Body of pancreas (tissue), 4 donors: ENCODE measurements at regions of chr6 and their contacts with region 1.

Region 1: DNA sequence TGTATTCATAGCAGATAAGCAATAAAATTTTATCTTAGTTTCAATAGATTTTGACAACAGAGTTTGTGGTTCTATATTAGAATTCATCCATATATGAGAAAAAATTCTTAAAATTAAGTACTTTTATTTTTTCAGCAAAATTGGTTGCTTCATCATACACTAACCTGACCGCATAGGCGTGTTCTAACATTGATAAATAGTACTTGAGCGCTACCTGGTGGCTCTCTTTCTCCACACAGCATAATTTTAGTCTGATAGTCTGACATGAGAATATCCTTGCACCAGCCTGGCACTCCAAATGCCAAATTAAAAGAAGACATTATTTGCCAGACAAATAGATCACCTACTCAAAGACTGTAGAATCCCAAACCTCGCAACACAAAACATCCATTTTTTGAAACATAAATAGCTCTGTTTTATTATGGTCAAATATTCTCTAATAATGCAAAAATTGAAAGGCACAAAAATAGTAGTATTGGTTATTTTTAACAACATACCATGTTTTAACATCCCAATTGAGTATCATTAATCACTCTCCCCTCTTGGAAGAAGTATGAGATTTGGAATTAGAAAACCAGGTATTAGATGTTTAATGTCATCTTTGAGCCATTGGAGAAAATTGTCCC is 33.0 kb upstream of the FILIP1 start:
- DNase-seq: peak; percentile 74 to 86 (median 80)
- ATAC-seq: peak; percentile 91
- H3K4me3 ChIP-seq: no peak overlapping the region
- H3K27ac ChIP-seq: no peak overlapping the region
- H3K4me1 ChIP-seq: peaks cover 6% of the 10 kb centered on the region
- H3K27me3 ChIP-seq: no peaks in the 10 kb centered on the region
- CTCF ChIP-seq: peak; percentile 33 to 92 (median 81)
- POLR2A ChIP-seq: no peak

Region 2: DNA sequence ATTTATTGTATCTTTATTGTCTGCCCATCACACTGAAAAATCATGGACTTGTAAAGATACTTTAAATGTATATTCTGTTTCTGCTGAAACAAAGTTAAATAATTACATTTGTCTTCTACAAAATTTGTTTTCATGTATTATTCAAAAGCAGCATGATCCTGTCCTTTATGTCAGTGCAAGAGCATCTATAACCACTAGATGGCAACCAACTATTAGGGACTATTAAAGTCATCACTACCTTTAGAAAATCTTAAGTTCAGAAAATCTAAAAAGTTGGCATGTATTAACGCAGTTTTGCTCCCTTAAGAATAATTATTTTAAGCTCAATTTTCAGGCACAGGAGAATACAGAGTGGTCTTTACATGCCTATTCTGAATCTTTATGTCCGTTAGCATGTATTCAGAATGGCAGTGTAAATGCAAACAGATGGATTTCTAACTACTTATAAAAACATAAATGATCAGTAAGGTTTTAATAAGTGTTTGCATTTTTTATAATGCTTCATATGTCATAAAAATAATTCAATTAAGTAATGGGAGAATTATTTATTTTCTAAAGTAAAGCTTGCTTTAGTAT is 259.8 kb before region 1 on chr6:
- intact Hi-C with region 1: loop called (anchors 10 kb)
- DNase-seq: no peak
- ATAC-seq: peak; percentile 72
- H3K4me3 ChIP-seq: no peak overlapping the region
- H3K27ac ChIP-seq: no peak overlapping the region
- H3K4me1 ChIP-seq: peaks cover 49% of the 10 kb centered on the region
- H3K27me3 ChIP-seq: no peaks in the 10 kb centered on the region
- CTCF ChIP-seq: peak; percentile 72 to 94 (median 81)
- POLR2A ChIP-seq: no peak

Region 3: DNA sequence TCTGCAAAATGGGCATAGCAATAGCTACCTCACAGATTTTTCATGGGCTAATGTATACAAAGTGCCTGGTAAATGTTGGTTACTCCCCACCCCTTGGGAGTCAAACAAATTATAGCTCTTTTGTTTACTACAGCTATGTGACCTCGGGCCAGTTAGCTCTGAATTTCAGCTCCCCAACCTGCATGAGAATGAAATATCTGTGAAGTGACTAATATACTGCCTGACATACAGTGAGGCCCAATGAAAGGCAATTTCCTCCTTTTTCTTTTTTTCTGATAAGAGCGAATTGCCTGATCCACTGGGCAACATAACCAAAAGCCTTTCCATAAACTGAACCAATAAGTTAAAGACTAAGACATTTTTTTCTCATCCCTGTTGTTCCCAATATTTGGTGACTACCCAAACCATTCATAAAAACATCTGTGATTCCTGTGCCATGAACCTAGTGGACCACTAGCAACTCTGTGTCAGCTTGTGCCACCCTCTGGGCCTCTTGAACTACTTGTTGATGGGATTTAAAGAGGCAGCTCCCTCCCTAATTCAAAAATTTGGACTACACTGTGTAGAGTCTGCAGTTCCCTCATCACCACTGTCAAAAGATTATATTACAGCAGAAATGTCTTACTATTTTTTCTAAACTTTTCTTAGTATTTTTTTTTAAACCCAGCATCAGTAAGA is 150.1 kb before region 1 on chr6:
- intact Hi-C with region 1: loop called (anchors 10 kb)
- DNase-seq: no peak
- ATAC-seq: no peak
- H3K4me3 ChIP-seq: no peak overlapping the region
- H3K27ac ChIP-seq: no peak overlapping the region
- H3K4me1 ChIP-seq: no peaks in the 10 kb centered on the region
- H3K27me3 ChIP-seq: no peaks in the 10 kb centered on the region
- CTCF ChIP-seq: no peak
- POLR2A ChIP-seq: no peak